ENCODE measurements at regions of chr2 and their contacts with region 1.

Region 1: GRCh38 chr2:46657042-46657504 is 177.7 kb downstream of the TMEM247 start:
- DNase-seq: peak; percentile 49
- ATAC-seq: peak; percentile 67
- H3K4me3 ChIP-seq: no peak overlapping the region
- H3K27ac ChIP-seq: no peak overlapping the region
- H3K4me1 ChIP-seq: peaks cover 17% of the 10 kb centered on the region
- H3K27me3 ChIP-seq: peaks cover 0 to 6% of the 10 kb centered on the region in 2 experiments; a peak in 1 of 5 replicates
- CTCF ChIP-seq: peak; percentile 65
- EP300 ChIP-seq: no peak
- POLR2A ChIP-seq: no peak
- RAD21 ChIP-seq: no peak; the same call in 1 of the 2 replicates

Region 2: DNA sequence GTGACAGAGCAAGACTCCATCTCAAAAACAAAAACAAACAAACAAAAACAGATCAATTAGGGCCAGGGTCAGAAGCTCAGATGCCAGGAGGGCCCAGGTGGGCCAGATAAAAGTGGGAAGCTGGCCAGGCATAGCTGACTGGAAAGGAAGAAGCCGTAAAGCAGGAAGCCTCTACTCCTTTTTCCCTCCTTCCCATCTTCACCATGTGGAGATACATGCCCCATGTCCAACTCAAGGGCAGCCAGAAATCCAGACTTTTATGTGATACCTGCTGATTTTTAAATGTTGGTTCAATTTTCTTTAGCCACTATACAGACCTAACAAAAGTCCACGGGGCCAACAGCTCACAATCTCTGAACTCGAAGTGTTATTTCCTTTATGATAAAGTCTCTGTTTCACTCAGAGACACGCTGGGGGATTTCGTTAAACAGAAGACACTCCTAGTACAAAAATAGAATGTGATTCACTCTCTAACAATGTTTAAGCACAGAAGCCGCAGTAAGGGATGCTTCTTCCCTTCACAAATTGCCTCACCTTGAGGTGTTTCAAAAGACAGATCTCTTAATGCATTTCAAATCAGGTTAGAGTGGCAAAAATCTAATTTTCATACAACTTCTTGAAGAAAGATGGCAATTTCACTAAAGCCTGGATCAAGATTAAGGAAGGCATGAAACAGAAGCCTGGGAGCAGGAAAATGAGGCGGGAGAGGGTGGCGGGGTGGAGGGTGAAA is 163.7 kb before region 1 on chr2:
- CTCF ChIA-PET with region 1: no interaction called
- POLR2A ChIA-PET with region 1: no interaction called
- in situ Hi-C with region 1: no loop called
- intact Hi-C with region 1: no loop called
- DNase-seq: no peak
- ATAC-seq: no peak
- H3K4me3 ChIP-seq: no peak overlapping the region
- H3K27ac ChIP-seq: no peak overlapping the region
- H3K4me1 ChIP-seq: peaks cover 15% of the 10 kb centered on the region; the same call in 1 of the 2 replicates
- H3K27me3 ChIP-seq: peaks cover 12 to 82% of the 10 kb centered on the region in 2 experiments; a peak in 4 of 5 replicates
- CTCF ChIP-seq: no peak
- EP300 ChIP-seq: no peak
- POLR2A ChIP-seq: no peak
- RAD21 ChIP-seq: no peak

Region 3: GRCh38 chr2:46679761-46680160 is 22.7 kb after region 1 on chr2:
- CTCF ChIA-PET with region 1: no interaction called
- POLR2A ChIA-PET with region 1: no interaction called
- in situ Hi-C with region 1: no loop called
- intact Hi-C with region 1: no loop called
- DNase-seq: no peak
- ATAC-seq: no peak
- H3K4me3 ChIP-seq: no peak overlapping the region
- H3K27ac ChIP-seq: no peak overlapping the region
- H3K4me1 ChIP-seq: no peaks in the 10 kb centered on the region
- H3K27me3 ChIP-seq: peaks cover 0 to 13% of the 10 kb centered on the region in 2 experiments; a peak in 2 of 5 replicates
- CTCF ChIP-seq: no peak
- EP300 ChIP-seq: no peak
- POLR2A ChIP-seq: no peak
- RAD21 ChIP-seq: no peak

Region 4: GRCh38 chr2:46776687-46777327 is 119.7 kb after region 1 on chr2:
- CTCF ChIA-PET with region 1: interaction called, 13 read pairs
- POLR2A ChIA-PET with region 1: no interaction called
- in situ Hi-C with region 1: loop called (anchors 5 kb)
- intact Hi-C with region 1: loop called (anchors 1 kb)
- DNase-seq: peak; percentile 69
- ATAC-seq: no peak
- H3K4me3 ChIP-seq: no peak overlapping the region
- H3K27ac ChIP-seq: no peak overlapping the region
- H3K4me1 ChIP-seq: peaks cover 49% of the 10 kb centered on the region
- H3K27me3 ChIP-seq: no peaks in the 10 kb centered on the region
- CTCF ChIP-seq: peak; percentile 77
- EP300 ChIP-seq: no peak
- POLR2A ChIP-seq: no peak
- RAD21 ChIP-seq: peak; percentile 63

Region 5: DNA sequence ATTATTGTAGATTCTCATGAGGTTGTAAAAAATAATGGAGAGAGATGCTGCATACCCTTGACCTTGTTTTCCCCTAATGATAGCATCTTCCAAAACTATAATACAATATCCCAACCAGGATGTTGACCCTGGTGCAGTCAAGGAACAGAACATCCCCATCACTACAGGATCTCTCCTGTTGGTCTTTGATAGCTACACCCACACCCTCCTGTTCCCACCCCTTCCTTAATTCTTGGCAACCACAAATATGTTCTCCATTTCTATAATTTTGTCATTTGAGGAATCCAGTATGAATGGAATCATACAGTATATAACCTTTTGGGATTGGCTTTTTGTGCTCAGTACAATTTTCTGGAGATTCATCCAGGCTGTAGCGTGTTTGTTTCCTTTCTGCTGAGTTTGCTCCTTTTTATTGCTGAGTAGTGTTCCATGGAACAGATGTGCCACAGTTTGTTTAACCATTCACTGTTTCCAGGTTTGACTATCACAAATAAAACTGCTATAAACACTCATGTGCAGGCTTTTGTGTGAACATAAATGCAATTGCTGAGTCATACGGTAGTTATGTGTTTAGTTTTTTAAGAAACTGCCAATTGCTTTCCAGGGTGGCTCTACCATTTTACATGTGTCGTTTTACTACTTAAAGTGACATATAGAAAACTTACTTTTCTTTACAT is 236.3 kb after region 1 on chr2:
- CTCF ChIA-PET with region 1: no interaction called
- POLR2A ChIA-PET with region 1: no interaction called
- in situ Hi-C with region 1: loop called (anchors 5 kb)
- intact Hi-C with region 1: no loop called
- DNase-seq: no peak
- ATAC-seq: no peak
- H3K4me3 ChIP-seq: no peak overlapping the region
- H3K27ac ChIP-seq: no peak overlapping the region
- H3K4me1 ChIP-seq: peaks cover 7% of the 10 kb centered on the region
- H3K27me3 ChIP-seq: peaks cover 0 to 4% of the 10 kb centered on the region in 2 experiments; a peak in 2 of 5 replicates
- CTCF ChIP-seq: no peak
- EP300 ChIP-seq: no peak
- POLR2A ChIP-seq: no peak
- RAD21 ChIP-seq: no peak